ENCODE measurements at regions of chr7 and their contacts with region 1.

Region 1: DNA sequence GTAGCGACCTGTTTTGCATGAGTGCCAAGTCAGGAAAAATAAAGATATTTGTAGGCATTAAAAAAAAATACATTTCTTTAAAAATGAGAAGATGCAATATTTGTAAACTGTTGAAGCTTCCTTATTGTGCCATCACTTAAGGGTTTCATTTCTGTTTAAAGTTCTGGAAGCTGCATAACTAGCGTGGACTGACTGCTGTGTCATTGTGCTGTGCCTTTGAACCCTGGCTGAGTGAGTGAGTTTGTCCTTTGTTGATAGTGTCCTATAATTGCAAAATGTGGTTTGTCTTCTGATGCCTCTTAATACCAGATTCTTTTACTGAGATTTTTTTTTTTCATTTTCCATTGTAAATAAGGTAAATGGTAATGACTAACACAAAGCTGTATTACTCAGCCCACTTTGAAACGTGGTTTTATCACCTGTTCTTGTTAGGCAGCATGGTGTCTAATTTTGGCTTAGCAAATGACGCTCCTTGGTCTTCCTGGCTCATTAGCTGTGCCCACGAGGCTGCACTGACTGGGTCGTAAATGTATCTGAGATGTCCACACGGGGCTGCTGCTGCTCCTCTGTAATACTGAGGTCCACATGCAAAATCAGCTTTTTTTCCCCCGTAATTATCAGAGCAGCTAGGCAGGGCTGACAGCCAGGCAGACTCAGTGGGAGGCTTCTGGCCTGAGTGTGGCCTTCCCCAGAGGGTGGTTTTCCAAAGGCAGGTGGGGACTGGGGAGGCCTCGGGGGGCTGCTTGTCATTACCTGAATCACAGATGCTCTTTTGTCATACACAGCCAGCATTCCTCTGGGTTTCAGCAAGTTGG is 14.8 kb downstream of the ZSCAN25 start:
- DNase-seq: peak; percentile 54
- H3K27ac ChIP-seq: peak overlapping the region; percentile 71
- CTCF ChIP-seq: peak; percentile 60

Region 2: DNA sequence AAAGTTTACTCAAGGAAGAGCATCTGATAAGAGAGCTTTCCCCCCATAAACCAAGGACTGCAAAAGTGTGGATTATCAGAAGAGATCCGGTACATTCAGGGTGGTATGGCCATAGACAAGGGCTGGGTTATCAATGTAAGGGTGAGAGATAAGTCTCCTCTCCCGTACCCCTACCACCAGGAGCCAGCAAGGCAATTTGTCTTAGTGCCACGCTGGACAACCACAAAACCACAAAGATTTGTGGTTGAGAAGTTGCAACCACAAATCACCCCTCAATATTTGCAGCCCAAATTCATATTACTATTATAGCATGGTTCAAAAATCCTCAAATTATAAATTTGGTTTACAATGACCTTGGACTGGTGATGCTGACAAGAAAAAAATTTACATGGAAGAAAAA is 17.0 kb before region 1 on chr7:
- CTCF ChIA-PET with region 1: no interaction called
- POLR2A ChIA-PET with region 1: no interaction called
- DNase-seq: no peak
- H3K27ac ChIP-seq: no peak overlapping the region
- CTCF ChIP-seq: no peak

Region 3: GRCh38 chr7:99837649-99838361 is 206.3 kb after region 1 on chr7:
- CTCF ChIA-PET with region 1: interaction called, 27 read pairs
- POLR2A ChIA-PET with region 1: no interaction called
- DNase-seq: peak; percentile 11
- H3K27ac ChIP-seq: no peak overlapping the region
- CTCF ChIP-seq: peak; percentile 58